ENCODE measurements at regions of chr12 and their contacts with region 1.

Region 1: GRCh38 chr12:94980577-94980976 is 22.9 kb downstream of the NDUFA12 start:
- DNase-seq: peak in 1 of 35 experiments; percentile 56
- ATAC-seq: peak; percentile 29 to 84 (median 40)
- H3K4me3 ChIP-seq: no peak overlapping the region
- H3K4me3 Mint-ChIP-seq: peak overlapping the region in 1 of 3 donors; percentile 32
- H3K27ac ChIP-seq: no peak overlapping the region
- H3K27ac Mint-ChIP-seq: peak overlapping the region; percentile 48 to 49
- H3K4me1 ChIP-seq: peaks cover 0 to 36% of the 10 kb centered on the region in 2 experiments
- H3K4me1 Mint-ChIP-seq: peaks cover 57 to 62% (median 61%) of the 10 kb centered on the region in 3 donors
- H3K27me3 ChIP-seq: no peaks in the 10 kb centered on the region
- H3K27me3 Mint-ChIP-seq: no peaks in the 10 kb centered on the region

Region 2: DNA sequence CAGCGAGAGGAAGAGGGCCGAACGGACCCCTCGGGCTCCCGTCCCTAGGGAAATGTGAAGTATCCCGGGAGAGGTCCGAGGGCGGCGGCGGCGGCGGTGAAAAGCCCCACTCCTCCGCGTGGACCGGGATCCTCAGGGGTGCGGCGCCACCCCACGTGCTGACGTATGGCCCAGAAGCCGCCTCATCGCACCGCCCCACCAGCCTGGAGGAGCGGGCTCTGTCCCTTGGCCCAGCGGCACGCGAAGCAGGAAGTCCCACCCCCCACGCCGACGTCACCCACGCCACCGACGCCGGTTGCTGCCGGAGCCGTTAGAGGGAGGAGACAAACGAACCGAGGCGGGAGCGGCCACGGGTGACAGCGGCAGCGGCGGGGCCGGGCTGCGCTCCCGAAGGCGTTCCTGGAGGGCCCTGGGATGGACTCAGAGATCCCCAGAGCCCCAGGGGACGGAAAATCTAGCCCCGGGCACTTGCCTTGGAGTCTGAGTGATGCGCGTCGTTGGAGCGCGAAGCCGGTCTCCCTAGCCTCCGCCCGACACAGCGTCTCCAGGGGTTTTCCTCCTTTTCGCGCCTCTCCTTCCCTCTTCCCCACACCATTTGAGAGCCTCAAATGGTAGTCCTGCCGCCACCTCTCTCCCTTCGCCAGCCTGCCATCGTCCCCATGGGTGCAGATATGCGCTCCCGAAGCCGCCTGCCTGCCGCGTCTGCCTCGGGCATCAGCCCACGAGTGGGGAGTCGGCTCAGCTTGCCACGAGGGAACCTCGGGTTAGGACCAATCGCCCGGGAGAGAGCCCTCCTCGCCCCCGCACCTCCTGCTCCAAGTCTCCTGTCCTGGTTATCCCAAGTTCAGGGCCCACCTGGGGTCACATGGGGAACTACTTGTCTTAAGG is 520.6 kb before region 1 on chr12 and contains the start of gene CEP83:
- CTCF ChIA-PET with region 1: no interaction called
- POLR2A ChIA-PET with region 1: no interaction called
- DNase-seq: peak; percentile 90 to 98 (median 95)
- ATAC-seq: peak; percentile 97 to 99 (median 99)
- H3K4me3 ChIP-seq: peak within 1 kb of the TSS; percentile 93 to 98
- H3K4me3 Mint-ChIP-seq: peak within 1 kb of the TSS; percentile 87 to 95 (median 92)
- H3K27ac ChIP-seq: peak within 1 kb of the TSS; percentile 93
- H3K27ac Mint-ChIP-seq: peak within 1 kb of the TSS; percentile 76 to 85
- H3K4me1 ChIP-seq: peaks cover 4 to 17% of the 10 kb centered on the region in 2 experiments
- H3K4me1 Mint-ChIP-seq: peaks cover 22 to 32% (median 30%) of the 10 kb centered on the region in 3 donors
- H3K27me3 ChIP-seq: peaks cover 0 to 6% of the 10 kb centered on the region in 2 experiments
- H3K27me3 Mint-ChIP-seq: peaks cover 6 to 7% of the 10 kb centered on the region in 2 donors
- total RNA-seq, gene CEP83: 12.6 to 17.4 (median 14.6) TPM

Region 3: DNA sequence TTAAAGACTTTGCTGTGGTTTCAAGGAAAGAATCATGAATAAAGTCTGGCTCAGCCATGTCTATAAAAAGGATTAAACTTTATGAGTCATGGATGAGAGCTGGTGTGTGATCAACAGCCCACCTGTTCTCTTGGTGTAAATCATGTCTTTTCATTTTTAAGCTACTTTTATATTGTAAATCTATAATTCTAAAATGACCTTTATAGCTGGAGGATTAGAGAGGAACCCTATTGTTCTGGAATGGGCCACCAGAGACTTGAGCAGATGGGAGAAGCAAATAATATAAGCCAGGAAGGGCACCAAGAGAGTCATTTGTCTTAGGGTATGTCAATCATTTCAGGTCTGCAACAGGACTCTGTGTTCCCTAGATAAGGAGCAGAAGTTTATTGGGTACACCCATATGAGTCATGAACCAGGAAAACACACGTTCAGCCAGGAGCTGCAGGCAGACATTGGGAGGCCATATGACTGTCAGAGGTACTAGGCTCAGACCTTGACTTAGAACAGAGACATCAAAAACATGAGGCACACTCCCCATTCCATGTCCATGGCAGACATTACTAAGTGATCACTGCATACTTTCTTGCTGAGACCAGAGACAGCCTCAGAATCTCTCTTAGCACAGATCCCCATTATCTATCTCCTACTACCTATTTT is 26.4 kb before region 1 on chr12:
- CTCF ChIA-PET with region 1: no interaction called
- POLR2A ChIA-PET with region 1: no interaction called
- DNase-seq: no peak
- ATAC-seq: no peak
- H3K4me3 ChIP-seq: no peak overlapping the region
- H3K4me3 Mint-ChIP-seq: no peak overlapping the region
- H3K27ac ChIP-seq: no peak overlapping the region
- H3K27ac Mint-ChIP-seq: no peak overlapping the region
- H3K4me1 ChIP-seq: no peaks in the 10 kb centered on the region
- H3K4me1 Mint-ChIP-seq: peaks cover 0 to 11% (median 2%) of the 10 kb centered on the region in 3 donors
- H3K27me3 ChIP-seq: peaks cover 0 to 12% of the 10 kb centered on the region in 2 experiments
- H3K27me3 Mint-ChIP-seq: peaks cover 24 to 26% of the 10 kb centered on the region in 2 donors

Region 4: GRCh38 chr12:94998326-94998725 is 17.7 kb after region 1 on chr12:
- CTCF ChIA-PET with region 1: no interaction called
- POLR2A ChIA-PET with region 1: no interaction called
- DNase-seq: no peak
- ATAC-seq: no peak
- H3K4me3 ChIP-seq: no peak overlapping the region
- H3K4me3 Mint-ChIP-seq: peak overlapping the region in 2 of 3 donors; percentile 49 to 58
- H3K27ac ChIP-seq: no peak overlapping the region
- H3K27ac Mint-ChIP-seq: peak overlapping the region in 1 of 2 donors; percentile 11
- H3K4me1 ChIP-seq: peaks cover 16 to 20% of the 10 kb centered on the region in 2 experiments
- H3K4me1 Mint-ChIP-seq: peaks cover 51 to 64% (median 59%) of the 10 kb centered on the region in 3 donors
- H3K27me3 ChIP-seq: no peaks in the 10 kb centered on the region
- H3K27me3 Mint-ChIP-seq: no peaks in the 10 kb centered on the region

Region 5: DNA sequence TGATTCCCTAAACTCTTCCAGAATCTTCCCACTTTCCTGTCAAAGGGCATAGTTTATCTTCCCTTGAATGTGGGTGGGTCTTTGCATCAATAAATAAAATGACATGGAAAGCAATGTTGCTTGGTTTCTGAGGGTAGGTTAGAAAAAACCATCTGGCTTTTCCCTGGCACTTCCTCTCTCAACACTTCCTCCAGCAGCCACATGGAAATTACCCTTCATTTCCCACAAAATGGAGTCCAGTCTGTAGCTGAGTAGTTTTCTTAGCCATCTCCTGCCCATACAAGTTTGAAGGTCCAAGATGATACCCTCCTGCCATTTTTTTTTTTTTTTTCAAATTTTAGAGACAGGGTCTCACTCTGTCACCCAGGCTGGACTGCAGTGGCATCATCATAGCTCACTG is 34.0 kb after region 1 on chr12:
- CTCF ChIA-PET with region 1: interaction called in 1 of 2 experiments, 3 read pairs
- POLR2A ChIA-PET with region 1: interaction called in 1 of 2 experiments, 13 read pairs
- DNase-seq: no peak
- ATAC-seq: no peak
- H3K4me3 ChIP-seq: no peak overlapping the region
- H3K4me3 Mint-ChIP-seq: no peak overlapping the region
- H3K27ac ChIP-seq: no peak overlapping the region
- H3K27ac Mint-ChIP-seq: no peak overlapping the region
- H3K4me1 ChIP-seq: no peaks in the 10 kb centered on the region
- H3K4me1 Mint-ChIP-seq: peaks cover 0 to 17% (median 7%) of the 10 kb centered on the region in 3 donors
- H3K27me3 ChIP-seq: no peaks in the 10 kb centered on the region
- H3K27me3 Mint-ChIP-seq: no peaks in the 10 kb centered on the region